ENCODE measurements at regions of chr11 and their contacts with region 1.

Region 1: DNA sequence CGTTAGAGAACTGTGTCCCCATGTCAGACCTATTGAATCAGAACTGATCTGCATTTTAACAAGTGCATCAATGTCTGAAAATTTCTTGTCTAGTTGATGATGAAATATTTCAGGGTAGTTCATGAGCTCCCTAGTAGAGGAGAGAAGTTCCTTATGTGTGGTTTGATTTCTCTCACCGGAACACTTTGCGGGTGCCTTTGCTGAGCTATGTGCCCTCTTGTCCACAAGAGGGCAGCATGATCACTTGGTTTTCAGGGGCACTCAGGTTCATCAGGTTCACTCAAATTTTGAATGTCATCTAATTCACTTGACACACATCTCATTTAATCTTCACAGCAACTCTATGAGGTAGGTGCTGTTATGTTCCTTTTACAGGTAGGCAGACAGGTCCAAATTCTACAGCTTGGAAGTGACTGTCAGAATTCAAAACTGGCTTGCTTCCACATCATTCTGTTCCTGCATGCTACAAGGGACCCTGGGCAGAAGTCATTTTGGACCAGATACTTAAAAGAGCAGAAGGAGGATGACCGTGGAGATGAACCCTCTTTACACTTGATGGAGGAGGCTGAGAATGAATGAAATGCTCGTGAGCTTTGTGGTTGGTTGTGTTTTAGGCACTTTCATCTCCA is 55.6 kb downstream of the P4HA3 start:
- DNase-seq: peak; percentile 78
- H3K4me3 ChIP-seq: no peak overlapping the region
- H3K27ac ChIP-seq: no peak overlapping the region
- H3K4me1 ChIP-seq: no peaks in the 10 kb centered on the region
- H3K27me3 ChIP-seq: no peaks in the 10 kb centered on the region
- CTCF ChIP-seq: peak; percentile 98

Region 2: DNA sequence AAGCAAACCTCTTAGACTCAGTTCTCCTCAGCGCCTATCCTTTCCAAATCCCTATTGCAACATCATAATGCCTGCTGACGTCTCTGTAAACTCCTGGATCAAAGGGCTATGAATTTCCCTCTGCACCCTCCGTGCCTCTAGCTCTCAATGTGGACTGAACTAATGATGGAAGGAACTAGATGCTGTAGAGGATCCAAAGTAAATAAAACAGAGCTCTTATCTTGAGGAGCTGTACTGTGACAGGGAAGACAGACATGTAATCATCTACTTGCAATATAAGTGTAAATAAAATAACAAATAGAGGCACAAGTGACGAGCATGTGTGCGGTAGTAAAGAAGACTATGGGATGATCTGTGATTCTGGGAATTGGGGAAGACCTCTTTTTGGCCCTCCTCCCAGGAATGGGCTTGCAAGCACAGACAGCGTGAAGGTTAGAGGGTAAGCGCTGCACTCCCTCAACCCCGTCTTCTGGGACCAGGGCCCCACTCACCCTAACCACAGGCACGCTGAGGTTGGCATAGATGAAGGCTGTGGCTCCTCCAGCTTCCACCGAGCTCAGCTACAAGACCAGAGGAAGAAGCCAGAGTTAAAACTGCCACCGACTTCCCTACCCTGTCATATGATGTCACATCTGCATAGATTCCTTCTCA is 13.4 kb after region 1 on chr11:
- CTCF ChIA-PET with region 1: interaction called, 12 read pairs
- POLR2A ChIA-PET with region 1: no interaction called
- intact Hi-C with region 1: no loop called
- DNase-seq: no peak
- H3K4me3 ChIP-seq: no peak overlapping the region
- H3K27ac ChIP-seq: no peak overlapping the region
- H3K4me1 ChIP-seq: no peaks in the 10 kb centered on the region
- H3K27me3 ChIP-seq: no peaks in the 10 kb centered on the region
- CTCF ChIP-seq: no peak

Region 3: DNA sequence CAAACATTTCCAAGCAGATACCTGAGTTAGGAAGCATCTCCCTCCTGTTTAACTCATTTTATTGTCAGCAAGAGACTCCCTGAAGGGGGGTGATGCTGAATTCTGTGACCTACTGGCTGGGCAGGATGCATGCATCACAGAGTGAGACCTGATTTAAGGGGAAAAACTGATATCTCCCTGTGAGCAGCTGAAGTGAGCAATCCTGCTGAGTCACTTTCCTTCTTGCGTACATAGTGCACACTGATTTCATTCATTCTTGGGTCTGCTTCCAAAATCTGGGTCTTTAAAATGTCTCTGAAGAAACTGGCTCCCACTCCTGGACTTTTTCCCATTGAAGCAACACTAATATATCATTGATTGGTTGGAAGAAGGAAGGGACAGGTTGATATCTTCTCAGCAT is 32.3 kb after region 1 on chr11:
- CTCF ChIA-PET with region 1: no interaction called
- POLR2A ChIA-PET with region 1: no interaction called
- intact Hi-C with region 1: no loop called
- DNase-seq: peak; percentile 60
- H3K4me3 ChIP-seq: no peak overlapping the region
- H3K27ac ChIP-seq: no peak overlapping the region
- H3K4me1 ChIP-seq: peaks cover 7% of the 10 kb centered on the region
- H3K27me3 ChIP-seq: no peaks in the 10 kb centered on the region
- CTCF ChIP-seq: no peak

Region 4: GRCh38 chr11:74321487-74322188 is 65.8 kb after region 1 on chr11:
- CTCF ChIA-PET with region 1: interaction called, 5 read pairs
- POLR2A ChIA-PET with region 1: no interaction called
- intact Hi-C with region 1: loop called (anchors 5 kb)
- DNase-seq: peak; percentile 57
- H3K4me3 ChIP-seq: no peak overlapping the region
- H3K27ac ChIP-seq: no peak overlapping the region
- H3K4me1 ChIP-seq: peaks cover 13% of the 10 kb centered on the region
- H3K27me3 ChIP-seq: no peaks in the 10 kb centered on the region
- CTCF ChIP-seq: peak; percentile 84

Region 5: DNA sequence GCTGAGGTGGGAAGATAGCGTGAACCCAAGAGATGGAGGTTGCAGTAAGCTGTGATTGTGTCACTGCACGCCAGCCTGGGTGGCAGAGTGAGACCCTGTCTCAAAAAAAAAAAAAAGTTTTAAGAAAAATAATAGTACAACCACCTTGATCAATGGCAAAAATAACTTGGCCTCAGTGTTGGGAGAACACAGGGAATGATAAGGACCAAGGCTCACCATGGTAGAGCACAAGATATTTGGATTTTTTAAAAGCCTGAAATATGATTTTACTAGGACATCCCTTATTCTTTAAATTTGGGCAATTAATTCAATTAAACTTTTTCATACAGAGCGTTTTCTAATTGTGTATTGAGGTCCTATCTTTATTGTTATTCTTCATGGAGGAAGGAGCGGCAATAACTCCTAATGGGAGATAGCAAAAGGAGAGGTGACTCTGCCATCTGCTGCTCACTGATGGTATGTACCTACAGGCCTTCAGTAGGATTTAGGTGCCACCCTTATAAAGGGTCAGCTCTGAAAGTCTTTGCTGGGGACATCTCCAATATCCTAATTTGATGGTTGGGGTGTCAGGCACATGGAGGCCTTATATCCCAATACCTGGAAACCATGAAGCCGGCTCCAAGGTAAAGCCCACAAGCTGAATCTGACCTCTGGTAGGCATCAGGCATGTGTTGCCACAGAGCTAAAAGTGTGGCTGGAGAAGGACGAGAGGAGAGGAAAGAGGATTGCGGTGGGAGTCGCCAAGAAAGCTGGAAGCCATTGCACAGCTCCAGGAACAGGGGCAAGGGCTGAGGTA is 314.6 kb after region 1 on chr11:
- CTCF ChIA-PET with region 1: interaction called, 24 read pairs
- POLR2A ChIA-PET with region 1: no interaction called
- intact Hi-C with region 1: loop called (anchors 1 kb)
- DNase-seq: peak; percentile 81
- H3K4me3 ChIP-seq: no peak overlapping the region
- H3K27ac ChIP-seq: no peak overlapping the region
- H3K4me1 ChIP-seq: no peaks in the 10 kb centered on the region
- H3K27me3 ChIP-seq: no peaks in the 10 kb centered on the region
- CTCF ChIP-seq: peak; percentile 93

Region 6: GRCh38 chr11:74683279-74683871 is 427.5 kb after region 1 on chr11:
- CTCF ChIA-PET with region 1: no interaction called
- POLR2A ChIA-PET with region 1: no interaction called
- intact Hi-C with region 1: loop called (anchors 10 kb)
- DNase-seq: peak; percentile 39
- H3K4me3 ChIP-seq: peak overlapping the region; percentile 47
- H3K27ac ChIP-seq: no peak overlapping the region
- H3K4me1 ChIP-seq: no peaks in the 10 kb centered on the region
- H3K27me3 ChIP-seq: no peaks in the 10 kb centered on the region
- CTCF ChIP-seq: peak; percentile 61